Activated CD4-positive, alpha-beta T cell treated with anti-CD3 and anti-CD28 coated beads for 36 hours (primary cell): ENCODE measurements at regions of chr13 and their contacts with region 1.

Region 1: GRCh38 chr13:75219479-75220237 is 262.3 kb downstream of the TBC1D4 start:
- DNase-seq: peak; percentile 92
- ATAC-seq: peak; percentile 99
- H3K4me3 Mint-ChIP-seq: peak overlapping the region; percentile 44
- H3K27ac Mint-ChIP-seq: no peak overlapping the region
- H3K4me1 Mint-ChIP-seq: peaks cover 5% of the 10 kb centered on the region
- H3K27me3 Mint-ChIP-seq: peaks cover 21% of the 10 kb centered on the region

Region 2: DNA sequence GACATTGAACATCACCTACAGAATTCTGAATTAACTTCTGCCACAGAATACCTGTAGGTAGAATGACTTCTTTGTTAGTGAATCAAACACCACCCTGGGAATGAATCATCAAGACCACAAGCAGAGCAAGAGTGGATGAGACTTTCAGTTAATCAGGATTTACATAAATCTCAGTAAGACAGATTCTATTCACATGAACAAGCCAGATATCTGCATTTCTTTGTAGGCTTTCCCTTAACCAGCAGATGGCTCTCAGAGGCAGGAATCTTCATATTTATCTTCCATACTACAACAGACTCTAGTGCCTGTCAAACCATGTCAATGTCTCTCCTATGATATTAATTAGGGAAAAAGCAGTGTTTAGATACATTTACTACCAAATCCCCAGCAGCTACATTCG is 1497.5 kb before region 1 on chr13:
- CTCF ChIA-PET with region 1: no interaction called
- POLR2A ChIA-PET with region 1: no interaction called
- intact Hi-C with region 1: loop called in 1 of 2 experiments (anchors 10 kb)
- DNase-seq: peak; percentile 22
- ATAC-seq: peak; percentile 92
- H3K4me3 Mint-ChIP-seq: no peak overlapping the region
- H3K27ac Mint-ChIP-seq: no peak overlapping the region
- H3K4me1 Mint-ChIP-seq: peaks cover 47% of the 10 kb centered on the region
- H3K27me3 Mint-ChIP-seq: no peaks in the 10 kb centered on the region

Region 3: GRCh38 chr13:73754727-73755292 is 1464.8 kb before region 1 on chr13:
- CTCF ChIA-PET with region 1: no interaction called
- POLR2A ChIA-PET with region 1: no interaction called
- intact Hi-C with region 1: loop called (anchors 5 to 10 kb)
- DNase-seq: peak; percentile 10
- ATAC-seq: peak; percentile 47
- H3K4me3 Mint-ChIP-seq: no peak overlapping the region
- H3K27ac Mint-ChIP-seq: no peak overlapping the region
- H3K4me1 Mint-ChIP-seq: peaks cover 28% of the 10 kb centered on the region
- H3K27me3 Mint-ChIP-seq: no peaks in the 10 kb centered on the region

Region 4: GRCh38 chr13:73835138-73835721 is 1384.4 kb before region 1 on chr13:
- CTCF ChIA-PET with region 1: interaction called, 4 read pairs
- POLR2A ChIA-PET with region 1: no interaction called
- intact Hi-C with region 1: loop called in 1 of 2 experiments (anchors 10 kb)
- DNase-seq: no peak
- ATAC-seq: peak; percentile 57
- H3K4me3 Mint-ChIP-seq: no peak overlapping the region
- H3K27ac Mint-ChIP-seq: no peak overlapping the region
- H3K4me1 Mint-ChIP-seq: peaks cover 46% of the 10 kb centered on the region
- H3K27me3 Mint-ChIP-seq: no peaks in the 10 kb centered on the region

Region 5: DNA sequence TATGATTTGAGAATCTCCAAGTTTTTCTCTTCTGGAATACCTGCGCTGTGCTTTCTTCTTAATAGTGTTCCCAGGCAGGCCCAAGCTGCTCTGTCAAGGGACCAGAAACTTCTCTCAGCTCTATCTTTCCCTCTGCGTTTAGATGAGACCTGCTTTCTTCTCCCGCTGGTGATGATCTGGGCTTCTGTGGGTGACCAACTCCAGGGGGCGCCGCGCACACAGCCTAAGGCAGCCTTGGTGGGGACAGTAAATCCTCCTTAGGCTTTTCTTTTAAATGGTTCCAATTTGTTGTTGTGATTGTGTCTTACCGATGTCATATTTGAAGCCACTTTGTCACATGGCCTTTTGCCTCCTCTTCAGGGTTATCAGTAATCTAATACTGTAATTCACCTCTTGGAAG is 646.0 kb before region 1 on chr13:
- CTCF ChIA-PET with region 1: interaction called, 3 read pairs
- POLR2A ChIA-PET with region 1: no interaction called
- intact Hi-C with region 1: loop called in 1 of 2 experiments (anchors 5 kb)
- DNase-seq: peak; percentile 59
- ATAC-seq: no peak
- H3K4me3 Mint-ChIP-seq: no peak overlapping the region
- H3K27ac Mint-ChIP-seq: no peak overlapping the region
- H3K4me1 Mint-ChIP-seq: peaks cover 13% of the 10 kb centered on the region
- H3K27me3 Mint-ChIP-seq: peaks cover 29% of the 10 kb centered on the region

Region 6: GRCh38 chr13:75647126-75647784 is 427.6 kb after region 1 on chr13:
- CTCF ChIA-PET with region 1: no interaction called
- POLR2A ChIA-PET with region 1: no interaction called
- intact Hi-C with region 1: no loop called
- DNase-seq: no peak
- ATAC-seq: peak; percentile 72
- H3K4me3 Mint-ChIP-seq: no peak overlapping the region
- H3K27ac Mint-ChIP-seq: no peak overlapping the region
- H3K4me1 Mint-ChIP-seq: peaks cover 7% of the 10 kb centered on the region
- H3K27me3 Mint-ChIP-seq: no peaks in the 10 kb centered on the region